SK-N-SH (cell line): ENCODE measurements at regions of chr19 and their contacts with region 1.

Region 1: DNA sequence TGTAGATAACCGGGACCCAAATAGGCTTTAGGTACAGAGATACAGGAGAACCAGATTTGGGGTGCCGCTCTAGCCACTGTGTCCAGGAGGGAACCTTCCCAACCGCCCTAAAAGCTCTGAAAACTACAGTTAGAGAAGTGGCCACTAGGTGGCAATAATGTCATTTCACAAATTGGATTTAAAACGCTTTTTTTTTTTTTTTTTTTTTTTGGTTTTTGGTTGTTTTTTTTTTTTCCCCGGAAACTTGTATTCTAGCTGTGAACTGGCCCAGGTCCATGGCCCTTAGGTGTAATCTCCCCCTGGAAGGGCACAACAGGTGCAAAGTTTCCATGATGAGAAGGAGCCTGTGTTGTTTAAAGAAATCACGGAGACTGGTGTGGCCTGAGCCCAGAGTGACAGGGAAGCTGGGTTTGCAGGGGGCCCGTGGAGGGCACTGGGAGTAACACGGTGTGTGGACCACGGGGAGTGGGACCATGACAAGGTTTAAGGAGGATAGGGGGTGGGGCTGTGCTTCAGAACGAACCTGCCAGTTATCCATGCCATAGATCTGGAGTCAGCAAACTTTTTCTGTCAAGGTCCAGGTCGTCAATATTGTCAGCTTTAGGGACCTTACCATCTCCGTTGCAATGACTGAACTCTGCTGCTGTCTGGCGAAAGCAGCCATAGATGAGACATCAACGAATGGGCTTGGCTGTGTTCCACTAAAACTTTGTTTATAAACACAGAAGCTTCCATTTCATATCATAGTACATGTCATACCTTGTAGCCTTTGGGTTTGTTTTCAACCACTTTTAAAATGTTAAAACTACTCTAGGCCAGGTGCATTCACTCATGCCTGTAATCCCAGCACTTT is 10.1 kb downstream of the OR1I1 start:
- DNase-seq: peak; percentile 50
- H3K4me3 ChIP-seq: no peak overlapping the region
- H3K27ac ChIP-seq: no peak overlapping the region
- H3K4me1 ChIP-seq: no peaks in the 10 kb centered on the region; a peak in 1 of 4 replicates
- H3K27me3 ChIP-seq: peaks cover 37% of the 10 kb centered on the region
- CTCF ChIP-seq: peak; percentile 73
- EP300 ChIP-seq: no peak
- RAD21 ChIP-seq: peak; percentile 80

Region 2: GRCh38 chr19:15081911-15082310 is 10.2 kb before region 1 on chr19 and contains the start of gene OR1I1:
- CTCF ChIA-PET with region 1: interaction called, 22 read pairs
- POLR2A ChIA-PET with region 1: no interaction called
- DNase-seq: no peak
- H3K4me3 ChIP-seq: no peak within 1 kb of the TSS
- H3K27ac ChIP-seq: no peak within 1 kb of the TSS
- H3K4me1 ChIP-seq: no peaks in the 10 kb centered on the region
- H3K27me3 ChIP-seq: peaks cover 27% of the 10 kb centered on the region
- CTCF ChIP-seq: no peak
- EP300 ChIP-seq: no peak
- RAD21 ChIP-seq: no peak
- polyA plus RNA-seq, gene OR1I1: not detected in 2 replicates

Region 3: DNA sequence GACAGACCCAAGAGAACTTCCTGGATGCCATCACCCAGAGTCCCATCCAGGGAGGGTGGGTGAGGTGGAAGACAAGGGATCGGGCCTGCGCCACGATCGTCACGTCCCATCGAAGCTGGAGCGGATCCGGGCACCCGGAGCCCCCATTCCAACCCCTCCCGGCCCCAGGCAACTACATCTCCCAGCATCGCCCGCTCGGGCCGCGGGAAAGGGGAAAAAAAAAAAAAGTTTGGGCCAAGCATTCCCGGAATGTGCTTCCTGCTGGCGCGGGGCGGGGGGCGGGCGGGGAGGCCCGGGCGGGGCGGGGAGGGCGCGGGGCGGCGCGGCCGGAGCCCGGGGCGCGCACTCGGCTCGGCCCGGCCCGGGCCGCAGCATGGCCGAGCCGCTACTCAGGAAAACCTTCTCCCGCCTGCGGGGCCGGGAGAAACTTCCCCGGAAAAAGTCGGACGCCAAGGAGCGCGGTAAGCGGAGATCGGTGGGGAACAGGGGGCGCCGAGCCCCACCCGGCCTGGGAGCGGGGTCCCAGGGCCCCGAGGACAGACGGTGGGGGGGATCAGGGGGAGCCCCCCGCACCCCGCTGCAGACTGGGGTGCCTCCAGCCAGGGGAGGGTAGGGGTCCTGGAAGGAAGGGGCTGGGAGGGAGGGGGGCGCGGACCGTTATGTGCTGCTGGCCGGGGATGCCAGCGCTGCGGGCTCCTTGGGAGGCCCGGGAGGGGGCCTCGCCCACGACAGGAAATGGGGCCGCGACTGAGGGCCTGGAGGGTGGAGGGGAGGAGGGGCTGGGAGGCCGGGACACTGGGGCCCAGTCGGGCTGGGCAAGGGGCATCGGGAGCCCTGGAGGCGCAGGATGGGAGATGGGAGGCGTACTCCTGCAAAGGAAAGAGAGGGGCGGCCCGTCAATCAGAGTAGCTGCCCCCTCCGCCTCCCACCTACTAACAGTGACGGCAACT is 15.2 kb after region 1 on chr19 and contains the start of gene SYDE1:
- CTCF ChIA-PET with region 1: interaction called, 16 read pairs
- POLR2A ChIA-PET with region 1: no interaction called
- DNase-seq: peak; percentile 88
- H3K4me3 ChIP-seq: peak within 1 kb of the TSS; percentile 75 to 79
- H3K27ac ChIP-seq: peak within 1 kb of the TSS; percentile 62 to 67
- H3K4me1 ChIP-seq: peaks cover 0 to 9% of the 10 kb centered on the region in 2 experiments; a peak in 1 of 4 replicates
- H3K27me3 ChIP-seq: no peaks in the 10 kb centered on the region
- CTCF ChIP-seq: no peak
- EP300 ChIP-seq: no peak
- RAD21 ChIP-seq: no peak
- polyA plus RNA-seq, gene SYDE1: 40.6 and 44.1 TPM in 2 replicates

Region 4: GRCh38 chr19:15125232-15126067 is 33.3 kb after region 1 on chr19:
- CTCF ChIA-PET with region 1: interaction called, 10 read pairs
- POLR2A ChIA-PET with region 1: no interaction called
- DNase-seq: peak; percentile 99
- H3K4me3 ChIP-seq: peak overlapping the region; percentile 79 to 92
- H3K27ac ChIP-seq: peak overlapping the region; percentile 71 to 88
- H3K4me1 ChIP-seq: peaks cover 0 to 19% of the 10 kb centered on the region in 2 experiments; a peak in 2 of 4 replicates
- H3K27me3 ChIP-seq: no peaks in the 10 kb centered on the region
- CTCF ChIP-seq: no peak
- EP300 ChIP-seq: no peak
- RAD21 ChIP-seq: no peak

Region 5: DNA sequence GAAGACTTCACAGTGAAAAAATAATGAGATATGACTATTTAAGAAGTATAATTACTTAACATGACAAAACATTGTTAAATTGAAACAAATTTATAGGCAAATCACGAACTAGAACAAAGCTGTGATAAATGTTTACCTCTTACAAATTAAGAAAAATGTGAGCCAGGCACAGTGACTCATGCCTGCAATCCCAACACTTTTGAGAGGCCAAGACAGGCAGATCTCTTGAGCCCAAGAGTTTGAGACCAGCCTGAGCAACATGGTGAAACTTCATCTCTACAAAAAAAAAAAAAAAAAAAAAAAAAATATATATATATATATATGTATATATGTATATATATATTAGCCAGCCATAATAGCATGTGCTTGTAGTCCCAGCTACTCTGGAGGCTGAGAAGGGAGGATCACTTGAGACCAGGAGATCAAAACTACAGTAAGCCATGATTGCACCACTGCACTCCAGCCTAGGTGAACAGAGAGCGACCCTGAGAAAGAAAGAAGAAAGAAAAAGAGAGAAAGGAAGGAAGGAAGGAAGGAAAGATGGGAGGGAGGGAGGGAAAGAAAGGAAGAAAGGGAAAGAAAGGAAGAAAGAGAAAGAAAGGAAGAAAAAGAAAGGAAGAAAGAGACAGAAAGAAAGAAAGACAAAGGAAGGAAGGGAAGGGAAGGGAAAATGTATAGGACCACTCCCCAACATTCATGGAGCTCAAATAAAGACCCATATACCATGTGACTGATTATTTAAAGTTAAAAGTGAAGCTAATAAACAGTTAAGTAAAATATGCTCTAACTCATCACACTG is 54.8 kb after region 1 on chr19:
- CTCF ChIA-PET with region 1: interaction called, 105 read pairs
- POLR2A ChIA-PET with region 1: no interaction called
- DNase-seq: no peak
- H3K4me3 ChIP-seq: no peak overlapping the region
- H3K27ac ChIP-seq: no peak overlapping the region
- H3K4me1 ChIP-seq: no peaks in the 10 kb centered on the region
- H3K27me3 ChIP-seq: peaks cover 20% of the 10 kb centered on the region; the same call in 1 of the 2 replicates
- CTCF ChIP-seq: no peak
- EP300 ChIP-seq: no peak
- RAD21 ChIP-seq: no peak

Region 6: GRCh38 chr19:15154002-15154612 is 62.0 kb after region 1 on chr19:
- CTCF ChIA-PET with region 1: interaction called, 105 read pairs
- POLR2A ChIA-PET with region 1: no interaction called
- DNase-seq: peak; percentile 54
- H3K4me3 ChIP-seq: 0 out of 4 replicates have a peak overlapping the region, but pooled peaks of 1 of the 2 experiments have one; percentile 2
- H3K27ac ChIP-seq: no peak overlapping the region
- H3K4me1 ChIP-seq: no peaks in the 10 kb centered on the region
- H3K27me3 ChIP-seq: peaks cover 14% of the 10 kb centered on the region; the same call in 1 of the 2 replicates
- CTCF ChIP-seq: peak; percentile 61
- EP300 ChIP-seq: no peak
- RAD21 ChIP-seq: peak; percentile 38

Region 7: DNA sequence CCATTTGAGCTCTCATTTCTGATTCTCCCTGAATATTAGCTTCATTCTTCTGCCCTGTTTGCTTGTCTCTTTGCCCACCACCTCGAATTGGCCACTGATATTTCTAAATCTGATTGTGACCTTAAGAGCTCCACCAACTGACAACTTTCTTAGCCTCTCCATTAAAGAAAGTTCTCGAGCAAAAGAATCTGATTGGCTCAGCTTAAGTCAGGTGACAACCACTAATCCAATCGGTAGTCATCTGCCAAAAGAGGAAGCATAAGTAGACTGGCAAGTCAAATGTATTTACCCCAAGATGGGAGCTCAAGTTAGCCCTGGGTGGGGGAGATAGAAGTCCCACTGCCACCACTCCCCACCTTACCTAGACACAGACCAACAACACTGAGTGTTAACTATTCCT is 67.1 kb after region 1 on chr19:
- CTCF ChIA-PET with region 1: interaction called, 105 read pairs
- POLR2A ChIA-PET with region 1: no interaction called
- DNase-seq: no peak
- H3K4me3 ChIP-seq: no peak overlapping the region
- H3K27ac ChIP-seq: no peak overlapping the region
- H3K4me1 ChIP-seq: no peaks in the 10 kb centered on the region
- H3K27me3 ChIP-seq: no peaks in the 10 kb centered on the region
- CTCF ChIP-seq: no peak
- EP300 ChIP-seq: no peak
- RAD21 ChIP-seq: no peak